ENCODE measurements at regions of chr9 and their contacts with region 1.

Region 1: DNA sequence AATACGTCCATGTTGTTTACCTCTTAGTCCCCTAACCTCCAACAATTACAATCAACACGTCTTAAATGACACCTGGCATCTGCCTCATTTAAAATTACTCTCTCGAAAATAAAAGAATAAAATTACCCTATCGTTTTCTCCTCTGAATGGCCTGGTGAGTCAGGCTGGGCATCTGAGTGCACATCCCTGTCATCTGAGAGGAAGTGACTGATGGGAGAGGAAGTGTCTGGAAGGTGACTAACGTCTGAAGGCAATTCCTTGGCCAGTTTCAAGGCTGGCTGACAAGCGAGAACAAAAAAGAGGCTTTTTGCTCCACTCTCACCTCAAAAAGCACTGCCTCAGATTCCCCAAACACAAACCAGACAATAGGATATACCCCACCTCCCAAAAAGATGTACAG is 57.7 kb downstream of the MAPKAP1 start:
- DNase-seq: peak; percentile 91
- H3K4me3 ChIP-seq: peak overlapping the region in 1 of 3 experiments; percentile 21
- H3K27ac ChIP-seq: peak overlapping the region; percentile 89
- H3K4me1 ChIP-seq: peaks cover 29% of the 10 kb centered on the region
- H3K27me3 ChIP-seq: no peaks in the 10 kb centered on the region
- CTCF ChIP-seq: no peak

Region 2: GRCh38 chr9:124593651-124594058 is 1055.7 kb before region 1 on chr9:
- CTCF ChIA-PET with region 1: no interaction called
- dilution Hi-C with region 1: no loop called
- in situ Hi-C with region 1: no loop called
- intact Hi-C with region 1: no loop called
- DNase-seq: no peak
- H3K4me3 ChIP-seq: no peak overlapping the region
- H3K27ac ChIP-seq: no peak overlapping the region
- H3K4me1 ChIP-seq: no peaks in the 10 kb centered on the region
- H3K27me3 ChIP-seq: no peaks in the 10 kb centered on the region
- CTCF ChIP-seq: no peak

Region 3: DNA sequence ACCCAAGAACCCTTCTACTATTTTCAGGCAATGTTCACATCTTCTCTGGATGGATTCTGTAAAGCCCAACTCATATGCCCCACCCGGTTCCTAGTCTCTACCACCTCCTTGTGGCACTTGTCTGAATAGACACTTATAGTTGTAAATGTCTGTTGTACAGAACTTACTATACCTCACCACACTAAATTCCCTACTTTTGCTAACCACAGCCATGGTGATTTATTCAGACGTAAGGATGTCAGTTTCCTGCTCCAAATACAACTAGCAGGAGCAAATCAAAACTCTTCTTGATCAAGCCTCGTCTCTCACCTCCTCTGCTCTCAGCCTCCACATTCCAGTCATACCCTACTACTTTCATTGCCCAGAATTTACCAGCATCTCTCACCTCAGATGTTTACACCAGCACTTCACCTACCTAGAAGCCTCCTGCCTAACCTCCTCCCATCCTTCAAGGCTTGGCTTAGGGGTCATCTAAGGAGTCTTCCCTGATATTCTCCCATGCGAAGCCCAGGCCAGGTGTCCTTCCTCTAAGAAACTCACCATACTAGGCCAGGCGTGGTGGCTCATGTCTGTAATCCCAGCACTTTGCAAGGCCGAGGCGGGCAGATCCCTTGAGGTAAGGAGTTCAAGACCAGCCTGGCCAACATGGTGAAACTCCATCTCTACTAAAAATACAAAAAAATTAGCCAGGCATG is 17.8 kb before region 1 on chr9:
- CTCF ChIA-PET with region 1: no interaction called
- dilution Hi-C with region 1: no loop called
- in situ Hi-C with region 1: no loop called
- intact Hi-C with region 1: loop called (anchors 2 kb)
- DNase-seq: peak; percentile 42
- H3K4me3 ChIP-seq: no peak overlapping the region
- H3K27ac ChIP-seq: peak overlapping the region; percentile 14
- H3K4me1 ChIP-seq: peaks cover 47% of the 10 kb centered on the region
- H3K27me3 ChIP-seq: no peaks in the 10 kb centered on the region
- CTCF ChIP-seq: peak; percentile 44 to 53

Region 4: GRCh38 chr9:125674981-125675973 is 26.0 kb after region 1 on chr9:
- CTCF ChIA-PET with region 1: no interaction called
- dilution Hi-C with region 1: no loop called
- in situ Hi-C with region 1: no loop called
- intact Hi-C with region 1: loop called (anchors 1 kb)
- DNase-seq: peak; percentile 65
- H3K4me3 ChIP-seq: peak overlapping the region in 2 of 3 experiments; percentile 6 to 16
- H3K27ac ChIP-seq: peak overlapping the region; percentile 19
- H3K4me1 ChIP-seq: peaks cover 16% of the 10 kb centered on the region
- H3K27me3 ChIP-seq: no peaks in the 10 kb centered on the region
- CTCF ChIP-seq: no peak